Colonic mucosa (tissue), 4 donors: ENCODE measurements at regions of chr11 and their contacts with region 1.

Region 1: DNA sequence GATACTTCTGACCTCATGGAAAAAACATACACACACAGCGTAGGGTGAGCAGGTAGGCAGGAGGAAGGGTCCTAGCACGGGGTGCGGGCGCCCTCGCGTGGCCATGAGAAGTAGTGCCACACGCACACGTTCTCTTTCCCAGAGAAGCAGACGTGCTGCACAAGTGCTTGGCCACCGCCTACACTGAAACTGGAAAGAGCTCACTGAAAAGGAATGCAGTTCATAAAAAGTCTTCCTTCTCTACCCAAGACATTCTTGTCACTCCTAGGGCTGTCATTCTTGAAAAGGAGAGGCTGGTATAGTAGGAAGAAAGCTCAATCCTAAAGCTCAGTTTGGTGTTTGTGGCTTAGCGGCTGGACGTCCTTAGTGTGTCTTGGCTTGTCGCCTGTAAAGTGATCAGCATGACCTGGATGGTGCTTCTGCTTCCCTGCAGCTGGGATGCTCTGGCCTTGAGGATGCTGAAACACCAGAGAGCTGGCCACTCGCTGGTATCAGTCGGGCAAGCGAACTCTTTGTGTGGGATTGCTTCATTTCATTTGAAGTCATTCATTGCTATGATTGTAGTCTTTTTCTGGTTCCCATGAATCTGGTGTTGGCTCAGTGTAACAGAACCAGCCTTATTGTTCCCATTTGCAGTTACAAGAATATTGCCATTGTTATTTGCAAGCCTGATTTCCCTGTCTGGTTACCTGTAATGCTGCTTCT is 303.8 kb downstream of the NTM start:
- DNase-seq: peak; percentile 62
- H3K4me3 ChIP-seq: no peak overlapping the region
- H3K27ac ChIP-seq: no peak overlapping the region
- H3K4me1 ChIP-seq: no peaks in the 10 kb centered on the region
- H3K27me3 ChIP-seq: no peaks in the 10 kb centered on the region
- CTCF ChIP-seq: peak; percentile 88

Region 2: GRCh38 chr11:130924770-130925169 is 749.4 kb before region 1 on chr11:
- intact Hi-C with region 1: loop called (anchors 5 kb)
- DNase-seq: no peak
- H3K4me3 ChIP-seq: no peak overlapping the region
- H3K27ac ChIP-seq: no peak overlapping the region
- H3K4me1 ChIP-seq: no peaks in the 10 kb centered on the region
- H3K27me3 ChIP-seq: no peaks in the 10 kb centered on the region
- CTCF ChIP-seq: no peak

Region 3: GRCh38 chr11:131064373-131064991 is 609.7 kb before region 1 on chr11:
- intact Hi-C with region 1: loop called (anchors 2 kb)
- DNase-seq: peak; percentile 30
- H3K4me3 ChIP-seq: no peak overlapping the region
- H3K27ac ChIP-seq: no peak overlapping the region
- H3K4me1 ChIP-seq: no peaks in the 10 kb centered on the region
- H3K27me3 ChIP-seq: no peaks in the 10 kb centered on the region
- CTCF ChIP-seq: peak; percentile 64

Region 4: DNA sequence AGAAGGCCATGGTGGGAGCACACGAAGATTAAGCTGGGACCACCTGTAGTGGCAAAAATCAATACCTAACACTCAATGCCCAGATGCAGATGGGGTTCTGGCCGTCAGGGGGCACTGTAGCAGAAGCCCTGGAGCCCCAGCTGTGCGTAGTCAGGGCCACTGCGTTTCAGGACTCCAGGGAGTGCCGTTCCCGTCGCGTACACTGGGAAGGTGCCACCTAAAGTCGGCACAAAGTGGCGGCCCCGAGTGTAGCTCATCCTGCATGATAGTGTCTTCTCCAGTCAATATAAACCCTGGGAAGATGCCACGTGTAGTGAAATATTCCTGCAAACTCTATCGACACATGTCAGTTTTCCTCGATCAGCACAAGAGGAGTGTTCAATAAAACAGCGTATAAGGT is 427.5 kb before region 1 on chr11:
- intact Hi-C with region 1: loop called (anchors 10 kb)
- DNase-seq: peak; percentile 45
- H3K4me3 ChIP-seq: no peak overlapping the region
- H3K27ac ChIP-seq: no peak overlapping the region
- H3K4me1 ChIP-seq: no peaks in the 10 kb centered on the region
- H3K27me3 ChIP-seq: no peaks in the 10 kb centered on the region
- CTCF ChIP-seq: peak; percentile 40